Astrocyte of the cerebellum (primary cell): ENCODE measurements at regions of chr16 and their contacts with region 1.

Region 1: DNA sequence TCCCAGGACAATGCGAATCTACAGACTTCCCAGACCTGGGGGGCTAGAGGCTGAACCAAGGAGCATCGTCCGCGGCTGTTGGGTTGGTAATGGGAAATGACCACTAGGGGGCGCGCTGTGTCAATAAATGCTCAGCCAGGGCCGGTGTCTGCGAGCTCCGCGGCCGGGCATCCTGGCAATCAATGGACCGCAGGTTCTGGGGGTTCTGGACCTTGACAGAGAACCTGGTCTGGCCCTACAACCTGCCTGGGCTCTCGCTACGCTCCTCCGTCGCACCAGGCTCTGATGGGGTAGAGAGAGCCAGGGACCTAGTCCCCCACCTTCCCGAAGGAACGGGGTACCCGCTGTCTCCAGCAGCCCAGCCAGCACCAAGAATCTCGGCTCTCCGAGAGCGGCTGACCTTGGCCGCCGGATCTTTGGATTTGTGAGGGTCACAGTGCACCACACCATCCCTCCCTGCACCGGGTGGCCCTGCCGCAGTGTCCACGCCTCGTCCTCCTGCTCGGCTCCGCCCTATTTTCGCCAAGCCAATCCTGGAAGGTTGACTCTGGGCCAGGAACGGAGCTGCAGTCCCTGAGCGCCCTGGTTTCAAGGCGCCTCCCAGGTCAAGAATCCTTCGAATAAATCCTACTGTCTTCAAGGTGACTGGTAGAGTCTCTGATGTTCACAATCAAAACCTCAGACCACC is 20.4 kb upstream of the BEAN1 start:
- DNase-seq: peak; percentile 31
- H3K4me3 ChIP-seq: peak overlapping the region; percentile 51
- CTCF ChIP-seq: peak; percentile 74

Region 2: GRCh38 chr16:66462912-66463311 is 56.2 kb after region 1 on chr16:
- in situ Hi-C with region 1: no loop called
- DNase-seq: peak; percentile 63
- H3K4me3 ChIP-seq: no peak overlapping the region
- CTCF ChIP-seq: no peak

Region 3: DNA sequence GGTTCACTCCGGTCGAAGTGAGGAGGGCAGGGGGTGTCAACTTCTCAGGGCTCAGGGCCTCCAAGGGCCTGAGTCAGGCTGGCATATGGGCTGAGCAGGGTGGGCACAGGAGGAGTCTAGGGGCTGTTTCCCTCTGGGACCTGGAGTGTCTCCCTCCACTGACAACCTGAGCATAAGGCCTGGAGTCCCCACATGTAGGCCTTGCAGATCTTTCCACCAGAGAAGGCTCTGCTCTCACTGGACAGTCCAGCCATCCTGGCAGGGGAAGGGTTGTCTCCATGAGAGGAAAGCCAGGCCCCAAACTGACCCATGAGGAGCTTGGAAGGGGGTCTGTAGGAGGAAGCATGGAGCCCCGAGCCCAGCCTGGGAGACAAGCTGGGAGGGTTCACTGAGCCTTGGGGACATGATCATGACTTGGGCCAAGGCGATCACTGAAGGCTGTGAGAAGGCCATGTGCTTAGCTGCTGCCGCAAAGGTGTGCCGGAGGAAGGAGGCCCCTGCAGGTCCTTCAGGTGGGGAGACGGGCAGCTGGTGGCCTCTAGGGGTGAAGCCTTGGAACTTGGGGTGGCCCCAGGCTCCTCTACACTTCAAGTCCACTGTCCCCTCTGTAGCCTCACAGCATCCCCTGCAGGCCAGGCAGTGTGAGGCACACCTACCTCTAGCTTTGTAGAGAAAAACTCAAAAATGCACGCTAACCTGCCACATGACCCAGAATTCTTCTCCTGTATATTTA is 182.5 kb after region 1 on chr16:
- in situ Hi-C with region 1: loop called (anchors 25 kb)
- DNase-seq: no peak
- H3K4me3 ChIP-seq: no peak overlapping the region
- CTCF ChIP-seq: peak; percentile 61